ENCODE measurements at regions of chr7 and their contacts with region 1.

Region 1: GRCh38 chr7:36723951-36724664 is at the start of gene AOAH:
- DNase-seq: peak; percentile 63 to 97 (median 81)
- ATAC-seq: peak; percentile 90
- H3K4me3 ChIP-seq: peak within 1 kb of the TSS; percentile 62 to 69
- H3K4me3 Mint-ChIP-seq: peak within 1 kb of the TSS; percentile 91
- H3K27ac ChIP-seq: peak within 1 kb of the TSS; percentile 74 to 81
- H3K27ac Mint-ChIP-seq: peak within 1 kb of the TSS; percentile 94
- H3K4me1 ChIP-seq: peaks cover 79% of the 10 kb centered on the region
- H3K4me1 Mint-ChIP-seq: peaks cover 92% of the 10 kb centered on the region
- H3K27me3 ChIP-seq: no peaks in the 10 kb centered on the region
- H3K27me3 Mint-ChIP-seq: no peaks in the 10 kb centered on the region
- CTCF ChIP-seq: no peak
- total RNA-seq, gene AOAH: 30.8 to 35.2 TPM

Region 2: DNA sequence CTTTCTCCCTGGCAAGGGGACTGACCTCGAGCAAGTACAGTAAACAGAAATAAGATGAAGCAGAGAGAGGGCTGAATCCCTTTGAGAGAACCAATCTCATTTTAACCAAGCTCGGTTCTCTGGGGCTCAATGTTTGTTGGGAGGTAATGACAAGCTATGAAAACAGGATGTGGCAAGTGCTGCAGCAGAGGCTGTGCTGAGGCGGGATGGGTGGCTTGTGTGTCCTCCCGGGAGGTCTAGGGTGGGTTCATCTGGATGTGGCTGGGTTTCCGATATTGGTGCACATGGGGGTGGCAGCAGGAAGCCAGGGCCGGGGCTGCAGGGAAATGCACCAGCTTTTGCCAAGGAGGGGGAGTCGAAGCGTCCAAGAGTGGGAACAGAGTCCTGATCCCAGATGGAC is 84.3 kb before region 1 on chr7:
- CTCF ChIA-PET with region 1: no interaction called
- POLR2A ChIA-PET with region 1: no interaction called
- intact Hi-C with region 1: loop called in 1 of 2 experiments (anchors 2 kb)
- DNase-seq: peak; percentile 21 to 86 (median 62)
- ATAC-seq: peak; percentile 87
- H3K4me3 ChIP-seq: peak overlapping the region in 1 of 2 experiments; percentile 7
- H3K4me3 Mint-ChIP-seq: peak overlapping the region; percentile 60
- H3K27ac ChIP-seq: peak overlapping the region; percentile 65 to 80
- H3K27ac Mint-ChIP-seq: peak overlapping the region; percentile 95
- H3K4me1 ChIP-seq: peaks cover 75% of the 10 kb centered on the region
- H3K4me1 Mint-ChIP-seq: peaks cover 95% of the 10 kb centered on the region
- H3K27me3 ChIP-seq: no peaks in the 10 kb centered on the region
- H3K27me3 Mint-ChIP-seq: no peaks in the 10 kb centered on the region
- CTCF ChIP-seq: no peak

Region 3: GRCh38 chr7:36686499-36686898 is 37.6 kb before region 1 on chr7:
- CTCF ChIA-PET with region 1: interaction called, 6 read pairs
- POLR2A ChIA-PET with region 1: interaction called, 5 read pairs
- intact Hi-C with region 1: loop called (anchors 2 kb)
- DNase-seq: peak in 8 of 9 experiments; percentile 19 to 75 (median 58)
- ATAC-seq: peak; percentile 92
- H3K4me3 ChIP-seq: no peak overlapping the region
- H3K4me3 Mint-ChIP-seq: peak overlapping the region; percentile 5
- H3K27ac ChIP-seq: peak overlapping the region in 1 of 2 experiments; percentile 47
- H3K27ac Mint-ChIP-seq: peak overlapping the region; percentile 81
- H3K4me1 ChIP-seq: peaks cover 27% of the 10 kb centered on the region
- H3K4me1 Mint-ChIP-seq: peaks cover 77% of the 10 kb centered on the region
- H3K27me3 ChIP-seq: no peaks in the 10 kb centered on the region
- H3K27me3 Mint-ChIP-seq: no peaks in the 10 kb centered on the region
- CTCF ChIP-seq: no peak

Region 4: DNA sequence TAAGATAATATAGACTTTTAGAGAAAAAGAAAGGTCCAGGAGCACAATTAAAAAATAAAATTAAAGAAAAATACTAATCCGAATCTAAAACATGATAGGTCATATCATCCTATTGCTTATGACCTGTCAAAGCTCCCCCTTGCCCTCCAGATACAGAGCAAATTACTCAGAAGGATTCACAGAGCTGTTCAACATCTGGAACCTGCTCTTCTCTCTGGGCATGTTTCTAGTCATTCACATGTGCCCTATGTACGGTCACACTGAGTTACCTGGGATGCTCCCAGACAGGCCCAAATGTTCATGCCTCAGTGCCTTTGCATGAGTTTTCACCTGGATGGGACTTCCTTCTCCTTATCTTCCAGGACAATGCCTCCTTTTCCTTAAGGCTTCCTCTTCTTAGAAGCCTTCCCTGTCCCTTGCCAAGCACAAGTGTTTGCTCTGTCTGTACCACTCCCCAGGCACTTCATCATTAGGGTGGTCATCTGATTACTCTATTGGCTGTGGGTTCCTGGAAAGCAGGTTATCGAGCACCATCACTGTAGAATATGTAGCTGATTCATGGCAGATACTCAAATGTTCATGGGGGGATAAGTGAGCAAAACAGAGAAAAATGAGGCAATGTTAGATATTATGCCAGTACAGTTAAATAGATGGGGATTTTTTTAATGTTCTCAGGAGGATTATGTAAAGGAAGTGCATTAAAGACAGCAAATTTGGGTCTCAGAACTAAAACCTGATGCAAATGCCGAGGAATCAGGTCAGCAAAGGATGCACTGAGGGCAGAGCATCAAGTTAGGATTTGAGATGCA is 12.2 kb after region 1 on chr7:
- CTCF ChIA-PET with region 1: interaction called, 8 read pairs
- POLR2A ChIA-PET with region 1: interaction called, 12 read pairs
- intact Hi-C with region 1: no loop called
- DNase-seq: peak in 1 of 9 experiments; percentile 15
- ATAC-seq: no peak
- H3K4me3 ChIP-seq: peak overlapping the region; percentile 2 to 36
- H3K4me3 Mint-ChIP-seq: peak overlapping the region; percentile 75
- H3K27ac ChIP-seq: peak overlapping the region; percentile 17 to 59
- H3K27ac Mint-ChIP-seq: peak overlapping the region; percentile 94
- H3K4me1 ChIP-seq: peaks cover 14% of the 10 kb centered on the region
- H3K4me1 Mint-ChIP-seq: peaks cover 35% of the 10 kb centered on the region
- H3K27me3 ChIP-seq: no peaks in the 10 kb centered on the region
- H3K27me3 Mint-ChIP-seq: no peaks in the 10 kb centered on the region
- CTCF ChIP-seq: no peak

Region 5: DNA sequence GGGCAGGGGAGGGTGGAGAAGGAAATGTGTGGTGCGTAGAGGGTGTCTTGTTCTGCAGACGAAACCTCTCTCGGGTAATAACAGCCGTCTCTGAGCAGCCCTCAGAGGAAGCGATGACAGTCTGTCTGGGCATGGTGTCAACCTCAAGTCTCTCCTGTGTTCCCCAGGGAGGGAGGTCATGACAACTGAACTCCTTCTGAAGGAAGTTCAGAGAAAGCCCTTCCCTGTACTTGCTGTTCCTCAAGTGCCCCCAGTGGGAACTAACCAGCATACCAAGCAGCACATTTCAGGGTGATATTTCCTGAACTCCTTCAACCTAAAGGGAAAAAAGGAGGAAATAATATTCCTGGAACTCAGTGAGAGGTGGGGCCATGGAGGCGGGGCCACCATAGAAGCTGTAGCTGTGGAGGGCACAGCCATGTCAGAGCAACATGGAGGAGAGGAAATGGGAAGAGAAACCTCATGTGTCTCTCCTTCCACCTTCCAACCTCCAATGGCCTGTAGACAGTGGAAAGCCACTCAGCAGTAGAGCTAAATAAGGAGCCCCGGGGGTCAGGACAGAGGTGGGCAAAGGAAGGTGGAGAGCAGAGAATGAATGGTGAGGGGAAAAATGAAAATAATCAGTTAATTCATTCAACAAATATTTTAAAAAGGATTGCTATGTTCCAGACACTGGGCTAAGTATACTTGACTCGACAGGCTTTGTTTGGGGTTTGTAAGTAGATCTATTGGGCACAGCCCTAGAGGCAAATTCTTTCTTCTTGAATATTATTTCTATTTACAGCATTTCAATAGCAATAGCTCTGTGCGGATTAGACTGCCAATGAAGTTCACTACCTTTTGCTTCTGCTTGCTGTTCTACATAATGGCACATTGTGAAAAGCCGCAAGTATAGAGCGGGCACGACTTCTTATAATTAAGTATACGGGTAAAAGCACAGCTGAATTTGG is 61.2 kb after region 1 on chr7:
- CTCF ChIA-PET with region 1: interaction called, 4 read pairs
- POLR2A ChIA-PET with region 1: interaction called, 24 read pairs
- intact Hi-C with region 1: loop called (anchors 1 to 2 kb)
- DNase-seq: peak; percentile 55 to 97 (median 76)
- ATAC-seq: peak; percentile 76
- H3K4me3 ChIP-seq: peak overlapping the region in 1 of 2 experiments; percentile 5
- H3K4me3 Mint-ChIP-seq: peak overlapping the region; percentile 46
- H3K27ac ChIP-seq: peak overlapping the region; percentile 67 to 87
- H3K27ac Mint-ChIP-seq: peak overlapping the region; percentile 99
- H3K4me1 ChIP-seq: peaks cover 84% of the 10 kb centered on the region
- H3K4me1 Mint-ChIP-seq: peaks cover 89% of the 10 kb centered on the region
- H3K27me3 ChIP-seq: no peaks in the 10 kb centered on the region
- H3K27me3 Mint-ChIP-seq: no peaks in the 10 kb centered on the region
- CTCF ChIP-seq: no peak